ENCODE measurements at regions of chr16 and their contacts with region 1.

Region 1: DNA sequence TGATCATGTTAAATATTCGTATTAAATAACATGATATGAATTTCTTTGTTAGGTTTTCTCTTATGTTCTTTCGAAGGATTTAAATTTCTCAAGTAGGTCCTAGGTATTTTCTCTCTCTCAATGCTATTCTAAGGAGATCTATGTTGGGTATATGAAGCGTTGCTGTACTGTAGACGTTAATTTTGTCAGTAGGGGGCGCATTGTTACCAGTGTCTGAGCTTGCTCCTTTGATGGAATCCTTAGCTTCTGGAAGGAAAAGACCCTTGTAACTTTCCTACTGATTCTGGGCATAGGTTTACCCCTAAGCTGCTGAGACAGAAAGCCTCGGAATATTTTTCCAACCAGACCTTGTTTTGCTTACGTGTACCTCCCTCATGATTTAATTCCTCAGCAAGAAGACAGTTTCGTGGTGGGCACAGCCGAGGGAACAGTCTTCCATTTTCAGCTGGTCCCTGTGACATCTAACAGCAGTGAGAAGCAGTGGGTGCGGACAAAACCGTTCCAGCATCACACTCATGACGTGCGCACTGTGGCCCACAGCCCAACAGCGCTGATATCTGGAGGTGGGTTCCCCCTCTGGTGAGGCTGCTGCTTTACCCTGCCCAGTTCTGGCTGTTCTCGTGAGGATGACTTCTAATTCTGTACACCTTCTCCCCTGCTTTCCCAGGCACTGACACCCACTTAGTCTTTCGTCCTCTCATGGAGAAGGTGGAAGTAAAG is 17.9 kb downstream of the UTP4 start:
- DNase-seq: peak; percentile 44 to 79 (median 64)
- H3K4me3 ChIP-seq: no peak overlapping the region
- H3K27ac ChIP-seq: no peak overlapping the region
- H3K4me1 ChIP-seq: peaks cover 0 to 11% of the 10 kb centered on the region in 2 donors
- H3K27me3 ChIP-seq: no peaks in the 10 kb centered on the region
- CTCF ChIP-seq: peak; percentile 52 to 88 (median 78)
- POLR2A ChIP-seq: no peak

Region 2: DNA sequence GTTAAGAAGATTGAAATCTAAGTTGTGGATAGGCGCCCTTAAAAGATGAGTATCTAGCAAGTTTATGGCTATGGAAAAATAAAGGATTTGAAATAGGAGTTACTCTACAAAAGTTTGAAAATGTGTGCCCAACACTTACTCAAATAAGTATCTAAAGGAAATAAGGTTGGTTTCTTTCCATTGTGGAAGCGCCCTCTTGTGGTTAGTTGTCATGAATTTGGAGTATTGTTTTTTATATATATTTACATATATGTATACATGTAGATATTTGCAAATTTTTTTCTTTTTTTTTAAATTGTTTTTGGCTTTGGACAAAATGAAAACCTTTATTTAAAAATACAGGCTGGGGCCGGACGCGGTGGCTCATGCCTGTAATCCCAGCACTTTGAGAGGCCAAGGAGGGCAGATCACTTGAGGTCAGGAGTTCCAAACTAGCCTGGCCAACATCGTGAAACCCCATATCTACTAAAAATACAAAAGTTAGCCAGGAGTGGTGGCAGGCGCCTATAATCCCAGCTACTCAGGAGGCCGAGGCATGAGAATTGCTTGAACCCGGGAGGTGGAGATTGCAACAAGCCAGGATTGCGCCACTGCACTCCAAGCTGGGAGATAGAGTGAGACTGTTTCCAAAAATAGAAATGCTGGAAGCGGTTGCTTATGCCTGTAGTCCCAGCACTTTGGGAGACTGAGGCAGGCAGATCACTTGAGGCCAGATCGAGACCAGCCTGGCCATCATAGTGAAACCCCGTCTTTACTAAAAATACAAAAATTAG is 136.8 kb after region 1 on chr16:
- intact Hi-C with region 1: loop called (anchors 5 to 10 kb)
- DNase-seq: peak; percentile 39 to 79 (median 58)
- H3K4me3 ChIP-seq: no peak overlapping the region
- H3K27ac ChIP-seq: peak overlapping the region in 1 of 5 donors; percentile 55
- H3K4me1 ChIP-seq: peaks cover 0 to 10% of the 10 kb centered on the region in 2 donors
- H3K27me3 ChIP-seq: no peaks in the 10 kb centered on the region
- CTCF ChIP-seq: peak; percentile 48 to 75 (median 71)
- POLR2A ChIP-seq: no peak

Region 3: GRCh38 chr16:69294051-69294450 is 143.7 kb after region 1 on chr16:
- intact Hi-C with region 1: loop called (anchors 5 to 10 kb)
- DNase-seq: no peak
- H3K4me3 ChIP-seq: no peak overlapping the region
- H3K27ac ChIP-seq: no peak overlapping the region
- H3K4me1 ChIP-seq: no peaks in the 10 kb centered on the region
- H3K27me3 ChIP-seq: no peaks in the 10 kb centered on the region
- CTCF ChIP-seq: no peak
- POLR2A ChIP-seq: no peak

Region 4: GRCh38 chr16:69310653-69311532 is 160.6 kb after region 1 on chr16 and contains the start of gene VPS4A:
- intact Hi-C with region 1: no loop called
- DNase-seq: peak; percentile 96 to 98 (median 97)
- H3K4me3 ChIP-seq: peak within 1 kb of the TSS; percentile 53 to 88 (median 74)
- H3K27ac ChIP-seq: peak within 1 kb of the TSS; percentile 47 to 96 (median 91)
- H3K4me1 ChIP-seq: peaks cover 18 to 24% of the 10 kb centered on the region in 2 donors
- H3K27me3 ChIP-seq: no peaks in the 10 kb centered on the region
- CTCF ChIP-seq: peak; percentile 45 to 98 (median 80)
- POLR2A ChIP-seq: peak; percentile 85 to 89
- total RNA-seq, gene VPS4A: 28.1 to 39.5 (median 34.5) TPM